Activated CD4-positive, alpha-beta T cell treated with anti-CD3 and anti-CD28 coated beads for 36 hours (primary cell): ENCODE measurements at regions of chr22 and their contacts with region 1.

Region 1: GRCh38 chr22:47382164-47382890 is 619.9 kb downstream of the TBC1D22A start:
- DNase-seq: no peak
- ATAC-seq: no peak
- H3K4me3 Mint-ChIP-seq: no peak overlapping the region
- H3K27ac Mint-ChIP-seq: no peak overlapping the region
- H3K4me1 Mint-ChIP-seq: no peaks in the 10 kb centered on the region
- H3K27me3 Mint-ChIP-seq: no peaks in the 10 kb centered on the region

Region 2: GRCh38 chr22:47408409-47408808 is 26.1 kb after region 1 on chr22:
- CTCF ChIA-PET with region 1: no interaction called
- POLR2A ChIA-PET with region 1: no interaction called
- intact Hi-C with region 1: loop called in 1 of 2 experiments (anchors 1 kb)
- DNase-seq: no peak
- ATAC-seq: no peak
- H3K4me3 Mint-ChIP-seq: no peak overlapping the region
- H3K27ac Mint-ChIP-seq: no peak overlapping the region
- H3K4me1 Mint-ChIP-seq: no peaks in the 10 kb centered on the region
- H3K27me3 Mint-ChIP-seq: peaks cover 10% of the 10 kb centered on the region